H1 (cell line): ENCODE measurements at regions of chr1 and their contacts with region 1.

Region 1: GRCh38 chr1:153465811-153466636 is 5.6 kb upstream of the S100A7 start:
- DNase-seq: peak; percentile 43 to 92
- H3K4me3 ChIP-seq: peak overlapping the region in 1 of 4 experiments; percentile 35; a peak in 1 of 8 replicates
- H3K27ac ChIP-seq: 0 out of 2 replicates have a peak overlapping the region, but pooled peaks have one; percentile 33
- H3K4me1 ChIP-seq: peaks cover 4 to 8% (median 5%) of the 10 kb centered on the region in 4 experiments; a peak in 5 of 7 replicates
- H3K27me3 ChIP-seq: no peaks in the 10 kb centered on the region; a peak in 1 of 7 replicates
- CTCF ChIP-seq: peak; percentile 78 to 89 (median 83)
- EP300 ChIP-seq: no peak
- POLR2A ChIP-seq: peak in 1 of 2 experiments; percentile 43; a peak in 1 of 3 replicates
- RAD21 ChIP-seq: peak; percentile 61 to 67

Region 2: DNA sequence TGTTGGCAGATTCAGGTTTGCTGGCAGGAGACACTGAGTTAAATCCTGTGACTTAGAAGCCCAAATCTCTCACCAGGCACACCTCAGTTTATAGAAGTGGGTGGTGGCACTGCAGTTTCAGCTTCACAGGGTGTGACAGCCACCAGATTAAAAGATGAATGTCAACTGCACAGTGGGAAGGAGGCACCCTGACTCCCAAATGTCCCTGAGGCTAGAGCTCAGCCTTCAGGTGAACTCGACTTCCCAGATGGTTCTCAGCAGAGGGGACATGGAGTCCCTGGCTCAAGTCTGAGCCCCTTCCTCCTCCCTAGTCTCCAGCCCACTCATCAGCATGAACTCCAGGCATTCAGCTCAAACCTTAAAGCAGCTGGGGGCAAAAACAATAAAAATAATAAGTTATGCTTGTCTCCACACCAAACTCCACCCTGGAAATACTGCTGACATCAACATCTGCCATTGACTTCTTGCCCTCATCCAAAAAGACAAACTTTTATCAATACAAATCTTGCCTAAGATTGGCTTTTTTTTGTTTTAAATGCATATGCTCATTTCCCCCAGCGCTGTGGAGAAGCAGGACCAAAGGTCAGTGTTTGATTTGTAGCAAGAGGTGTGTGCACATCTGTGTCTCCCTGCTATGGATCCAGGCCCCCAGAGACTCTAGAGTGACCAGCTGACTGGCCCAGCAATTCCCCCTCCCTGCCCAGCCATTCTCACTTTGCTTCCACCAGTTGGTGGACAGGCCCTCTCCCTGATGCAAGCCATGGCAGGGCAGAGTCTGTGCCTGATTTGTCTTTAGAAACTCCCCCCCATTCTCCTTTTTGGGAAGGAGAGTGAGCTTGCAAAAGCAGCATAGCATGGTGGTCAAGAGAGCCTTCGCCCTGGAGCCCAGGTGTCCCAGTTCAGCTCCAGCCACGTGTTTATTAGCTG is 12.9 kb after region 1 on chr1:
- CTCF ChIA-PET with region 1: interaction called, 20 read pairs
- POLR2A ChIA-PET with region 1: interaction called, 7 read pairs
- DNase-seq: no peak
- H3K4me3 ChIP-seq: no peak overlapping the region
- H3K27ac ChIP-seq: no peak overlapping the region
- H3K4me1 ChIP-seq: peaks cover 0 to 11% (median 0%) of the 10 kb centered on the region in 4 experiments; a peak in 2 of 7 replicates
- H3K27me3 ChIP-seq: no peaks in the 10 kb centered on the region
- CTCF ChIP-seq: no peak
- EP300 ChIP-seq: no peak
- POLR2A ChIP-seq: no peak
- RAD21 ChIP-seq: no peak

Region 3: GRCh38 chr1:153485863-153486262 is 19.8 kb after region 1 on chr1:
- CTCF ChIA-PET with region 1: interaction called, 20 read pairs
- POLR2A ChIA-PET with region 1: interaction called, 3 read pairs
- DNase-seq: no peak
- H3K4me3 ChIP-seq: no peak overlapping the region
- H3K27ac ChIP-seq: no peak overlapping the region
- H3K4me1 ChIP-seq: peaks cover 0 to 9% (median 0%) of the 10 kb centered on the region in 4 experiments; a peak in 5 of 7 replicates
- H3K27me3 ChIP-seq: no peaks in the 10 kb centered on the region; a peak in 1 of 7 replicates
- CTCF ChIP-seq: no peak
- EP300 ChIP-seq: no peak
- POLR2A ChIP-seq: no peak
- RAD21 ChIP-seq: no peak